ENCODE measurements at regions of chr11 and their contacts with region 1.

Region 1: GRCh38 chr11:65134386-65135253 is at the start of gene SYVN1:
- DNase-seq: peak; percentile 92
- H3K4me3 Mint-ChIP-seq: peak within 1 kb of the TSS; percentile 98
- H3K27ac Mint-ChIP-seq: peak within 1 kb of the TSS; percentile 98
- H3K4me1 Mint-ChIP-seq: peaks cover 35% of the 10 kb centered on the region
- H3K27me3 Mint-ChIP-seq: no peaks in the 10 kb centered on the region
- total RNA-seq, gene SYVN1: 39.4 to 42.2 TPM

Region 2: GRCh38 chr11:65040847-65041621 is 93.6 kb before region 1 on chr11 and contains the start of gene SAC3D1:
- CTCF ChIA-PET with region 1: no interaction called
- POLR2A ChIA-PET with region 1: interaction called, 11 read pairs
- DNase-seq: peak; percentile 95
- H3K4me3 Mint-ChIP-seq: peak within 1 kb of the TSS; percentile 91
- H3K27ac Mint-ChIP-seq: peak within 1 kb of the TSS; percentile 97
- H3K4me1 Mint-ChIP-seq: peaks cover 41% of the 10 kb centered on the region
- H3K27me3 Mint-ChIP-seq: no peaks in the 10 kb centered on the region
- total RNA-seq, gene SAC3D1: 24.2 to 24.8 TPM

Region 3: GRCh38 chr11:65095974-65096806 is 38.4 kb before region 1 on chr11 and contains the start of gene VPS51:
- CTCF ChIA-PET with region 1: interaction called, 3 read pairs
- POLR2A ChIA-PET with region 1: interaction called, 10 read pairs
- DNase-seq: peak; percentile 91
- H3K4me3 Mint-ChIP-seq: peak within 1 kb of the TSS; percentile 97
- H3K27ac Mint-ChIP-seq: peak within 1 kb of the TSS; percentile 96
- H3K4me1 Mint-ChIP-seq: peaks cover 25% of the 10 kb centered on the region
- H3K27me3 Mint-ChIP-seq: no peaks in the 10 kb centered on the region
- total RNA-seq, gene VPS51: 117 to 123 TPM

Region 4: DNA sequence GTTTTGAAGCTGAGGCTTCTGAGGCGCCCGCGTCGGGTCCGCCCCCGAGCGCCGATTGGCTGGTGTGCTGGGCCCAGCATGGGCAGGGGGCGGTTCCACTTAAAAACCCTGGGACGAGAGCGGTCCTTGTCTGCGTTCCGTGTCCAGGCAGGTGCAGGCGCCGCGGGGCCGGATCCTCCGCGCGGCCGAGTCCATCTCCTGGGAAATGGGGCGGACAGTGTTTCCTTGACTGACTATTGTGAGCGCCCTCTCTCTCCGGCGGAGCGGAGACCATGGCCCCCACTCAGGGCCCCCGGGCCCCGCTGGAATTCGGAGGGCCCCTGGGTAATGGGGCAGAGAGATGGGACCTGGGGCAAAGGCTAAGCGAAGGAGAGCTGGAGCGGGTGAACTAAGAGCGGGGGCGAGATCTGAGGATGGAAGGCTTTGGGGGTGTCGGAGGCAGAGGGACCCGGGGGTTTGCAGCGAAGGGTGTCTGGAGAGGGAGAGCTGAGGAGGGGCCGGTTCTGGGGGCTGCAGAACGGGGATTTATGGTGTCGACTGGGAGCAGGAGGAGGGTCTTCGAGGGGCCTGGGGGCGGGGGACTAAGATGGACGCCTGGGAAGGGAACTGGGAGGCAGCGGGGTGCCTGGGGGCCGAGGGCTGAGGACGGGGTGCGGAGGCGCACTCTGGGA is 22.7 kb before region 1 on chr11 and contains the start of gene TM7SF2:
- CTCF ChIA-PET with region 1: interaction called, 25 read pairs
- POLR2A ChIA-PET with region 1: interaction called, 42 read pairs
- DNase-seq: peak; percentile 96
- H3K4me3 Mint-ChIP-seq: peak within 1 kb of the TSS; percentile 87
- H3K27ac Mint-ChIP-seq: peak within 1 kb of the TSS; percentile 80
- H3K4me1 Mint-ChIP-seq: peaks cover 49% of the 10 kb centered on the region
- H3K27me3 Mint-ChIP-seq: no peaks in the 10 kb centered on the region
- total RNA-seq, gene TM7SF2: 27.2 to 28.4 TPM

Region 5: DNA sequence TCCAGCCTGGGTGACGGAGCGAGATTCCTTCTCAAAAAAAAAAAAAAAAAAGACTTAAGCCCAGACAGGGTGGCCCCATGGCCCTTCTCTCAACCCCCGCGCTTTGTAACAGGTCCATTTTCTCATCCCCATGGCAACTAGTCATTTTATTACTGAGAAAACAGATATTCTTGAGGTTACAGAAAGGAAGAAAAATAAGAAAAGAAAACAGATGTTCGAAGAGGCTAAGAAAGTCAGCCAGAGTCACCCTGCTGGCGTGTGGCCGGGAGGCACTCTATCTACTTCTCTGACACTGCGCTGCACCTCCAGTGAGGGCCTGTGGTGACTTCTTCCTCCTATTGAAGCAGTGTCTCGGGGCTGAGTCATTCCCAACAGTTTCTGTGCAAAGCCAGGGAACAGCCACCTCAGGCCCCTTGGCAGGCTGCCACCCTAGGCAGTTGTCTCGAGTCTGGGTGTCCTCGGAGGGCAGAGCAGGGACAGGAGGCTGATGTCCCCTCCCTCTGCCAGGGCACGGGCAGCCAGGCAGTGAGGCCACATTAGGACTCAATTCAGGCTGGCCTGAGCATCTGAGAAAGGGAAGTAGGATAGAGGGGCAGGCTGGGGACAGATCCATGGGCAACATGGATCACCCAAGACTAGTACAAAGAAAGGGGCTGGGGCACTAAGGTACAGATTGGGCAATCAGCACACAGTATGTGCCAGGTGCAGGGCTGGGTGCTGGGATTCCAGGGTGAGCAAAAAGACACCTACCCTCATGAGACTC is 16.1 kb after region 1 on chr11:
- CTCF ChIA-PET with region 1: no interaction called
- POLR2A ChIA-PET with region 1: interaction called, 15 read pairs
- DNase-seq: no peak
- H3K4me3 Mint-ChIP-seq: no peak overlapping the region
- H3K27ac Mint-ChIP-seq: no peak overlapping the region
- H3K4me1 Mint-ChIP-seq: peaks cover 19% of the 10 kb centered on the region
- H3K27me3 Mint-ChIP-seq: no peaks in the 10 kb centered on the region

Region 6: GRCh38 chr11:65180877-65181568 is 46.4 kb after region 1 on chr11:
- CTCF ChIA-PET with region 1: interaction called, 4 read pairs
- POLR2A ChIA-PET with region 1: interaction called, 30 read pairs
- DNase-seq: peak; percentile 65
- H3K4me3 Mint-ChIP-seq: peak overlapping the region; percentile 95
- H3K27ac Mint-ChIP-seq: peak overlapping the region; percentile 65
- H3K4me1 Mint-ChIP-seq: peaks cover 25% of the 10 kb centered on the region
- H3K27me3 Mint-ChIP-seq: no peaks in the 10 kb centered on the region

Measured in activated CD4-positive, alpha-beta memory T cell treated with anti-CD3 and anti-CD28 coated beads, Interleukin-2, amount 10 ng/mL, durations not matched to agents 7 days and 5 days (primary cell).